ENCODE measurements at regions of chr13 and their contacts with region 1.

Region 1: DNA sequence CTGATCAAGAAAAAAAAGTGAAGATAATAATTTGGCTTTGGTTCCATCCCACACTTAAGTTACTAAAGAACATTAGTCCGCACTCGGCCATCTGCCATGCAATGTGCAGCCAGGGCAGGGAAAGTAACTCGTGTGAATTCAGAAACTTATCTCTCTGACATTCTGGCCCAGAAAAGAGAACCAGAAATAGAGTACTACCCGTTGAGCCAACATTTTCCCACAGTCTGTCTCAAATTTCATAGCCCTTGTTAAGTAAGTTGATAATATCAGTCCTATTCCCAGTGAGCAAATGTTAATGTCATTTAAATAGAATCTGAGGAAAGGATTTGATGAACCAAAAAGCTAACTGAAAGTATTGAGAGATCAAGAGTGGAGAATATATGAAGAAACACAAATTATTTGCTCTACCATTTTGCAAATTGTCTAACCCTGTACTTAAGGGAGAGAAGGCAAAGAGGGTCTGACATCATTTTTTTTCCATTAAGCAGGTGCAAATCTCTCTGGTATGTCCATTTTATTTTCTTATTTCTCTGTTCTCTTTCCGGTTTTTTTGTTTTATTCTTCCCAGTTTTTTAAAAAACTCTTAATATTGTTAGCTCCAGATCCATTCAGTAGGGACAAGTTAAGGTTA is 156.3 kb downstream of the NDFIP2 start:
- DNase-seq: peak; percentile 76

Region 2: GRCh38 chr13:79673310-79673992 is 36.2 kb after region 1 on chr13:
- intact Hi-C with region 1: loop called (anchors 5 kb)
- DNase-seq: no peak

Region 3: GRCh38 chr13:79710376-79710775 is 73.1 kb after region 1 on chr13:
- intact Hi-C with region 1: no loop called
- DNase-seq: no peak